ENCODE measurements at regions of chr18 and their contacts with region 1.

Region 1: GRCh38 chr18:23503038-23503962 is at the start of gene RMC1:
- DNase-seq: peak; percentile 94 to 99 (median 98)
- ATAC-seq: peak; percentile 91
- H3K4me3 ChIP-seq: peak within 1 kb of the TSS; percentile 73 to 91
- H3K4me3 Mint-ChIP-seq: peak within 1 kb of the TSS; percentile 93
- H3K27ac ChIP-seq: peak within 1 kb of the TSS; percentile 83 to 88
- H3K27ac Mint-ChIP-seq: peak within 1 kb of the TSS; percentile 92
- H3K4me1 ChIP-seq: peaks cover 35% of the 10 kb centered on the region
- H3K4me1 Mint-ChIP-seq: peaks cover 49% of the 10 kb centered on the region
- H3K27me3 ChIP-seq: no peaks in the 10 kb centered on the region
- H3K27me3 Mint-ChIP-seq: no peaks in the 10 kb centered on the region
- CTCF ChIP-seq: no peak
- total RNA-seq, gene RMC1: 59.8 to 62.2 TPM

Region 2: GRCh38 chr18:23437357-23438045 is 65.8 kb before region 1 on chr18:
- CTCF ChIA-PET with region 1: interaction called, 3 read pairs
- POLR2A ChIA-PET with region 1: no interaction called
- intact Hi-C with region 1: loop called (anchors 1 to 5 kb)
- DNase-seq: peak; percentile 46 to 81 (median 77)
- ATAC-seq: peak; percentile 95
- H3K4me3 ChIP-seq: peak overlapping the region; percentile 81 to 96
- H3K4me3 Mint-ChIP-seq: peak overlapping the region; percentile 88
- H3K27ac ChIP-seq: peak overlapping the region in 1 of 2 experiments; percentile 21
- H3K27ac Mint-ChIP-seq: no peak overlapping the region
- H3K4me1 ChIP-seq: peaks cover 17% of the 10 kb centered on the region
- H3K4me1 Mint-ChIP-seq: peaks cover 22% of the 10 kb centered on the region
- H3K27me3 ChIP-seq: peaks cover 0 to 2% of the 10 kb centered on the region in 2 experiments
- H3K27me3 Mint-ChIP-seq: no peaks in the 10 kb centered on the region
- CTCF ChIP-seq: no peak

Region 3: DNA sequence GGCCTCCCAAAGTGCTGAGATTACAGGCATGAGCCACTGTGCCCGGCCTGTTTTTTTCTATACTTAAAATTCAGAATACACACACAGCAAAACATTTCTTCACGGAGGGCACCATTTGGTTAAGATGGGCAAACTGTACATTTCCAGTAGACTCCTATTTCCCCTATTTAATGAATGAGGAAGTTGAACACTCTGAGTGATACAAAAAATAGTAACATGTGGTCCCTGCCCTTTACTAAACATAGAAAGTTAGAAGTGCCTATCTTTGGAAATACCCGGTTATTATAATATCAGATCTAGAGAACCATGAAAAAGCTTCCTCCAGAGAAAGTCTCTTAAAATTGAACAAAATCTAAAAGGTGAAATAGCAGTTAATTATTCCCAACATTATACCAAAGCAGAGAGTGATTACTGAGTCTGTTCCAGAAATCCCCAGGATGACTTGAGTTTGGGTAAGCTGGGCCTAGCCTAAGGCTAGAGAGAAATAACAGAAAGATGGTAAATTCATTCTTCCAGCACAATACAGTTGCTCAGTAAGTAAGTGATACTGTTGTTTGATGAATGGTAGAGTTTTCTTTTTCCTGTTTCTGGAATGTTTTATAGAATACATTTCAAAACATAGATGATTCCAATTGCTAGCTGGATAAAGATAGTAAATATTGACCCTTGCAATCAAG is 23.3 kb before region 1 on chr18:
- CTCF ChIA-PET with region 1: interaction called, 10 read pairs
- POLR2A ChIA-PET with region 1: no interaction called
- intact Hi-C with region 1: no loop called
- DNase-seq: peak in 1 of 9 experiments; percentile 12
- ATAC-seq: no peak
- H3K4me3 ChIP-seq: no peak overlapping the region
- H3K4me3 Mint-ChIP-seq: no peak overlapping the region
- H3K27ac ChIP-seq: no peak overlapping the region
- H3K27ac Mint-ChIP-seq: peak overlapping the region; percentile 55
- H3K4me1 ChIP-seq: no peaks in the 10 kb centered on the region
- H3K4me1 Mint-ChIP-seq: no peaks in the 10 kb centered on the region
- H3K27me3 ChIP-seq: no peaks in the 10 kb centered on the region
- H3K27me3 Mint-ChIP-seq: no peaks in the 10 kb centered on the region
- CTCF ChIP-seq: no peak

Region 4: GRCh38 chr18:23515911-23516546 is 12.7 kb after region 1 on chr18:
- CTCF ChIA-PET with region 1: interaction called, 15 read pairs
- POLR2A ChIA-PET with region 1: interaction called, 4 read pairs
- intact Hi-C with region 1: loop called (anchors 1 to 2 kb)
- DNase-seq: peak; percentile 49 to 87 (median 76)
- ATAC-seq: peak; percentile 99
- H3K4me3 ChIP-seq: no peak overlapping the region
- H3K4me3 Mint-ChIP-seq: no peak overlapping the region
- H3K27ac ChIP-seq: peak overlapping the region in 1 of 2 experiments; percentile 20
- H3K27ac Mint-ChIP-seq: peak overlapping the region; percentile 70
- H3K4me1 ChIP-seq: no peaks in the 10 kb centered on the region
- H3K4me1 Mint-ChIP-seq: peaks cover 15% of the 10 kb centered on the region
- H3K27me3 ChIP-seq: no peaks in the 10 kb centered on the region
- H3K27me3 Mint-ChIP-seq: no peaks in the 10 kb centered on the region
- CTCF ChIP-seq: peak; percentile 86

Region 5: DNA sequence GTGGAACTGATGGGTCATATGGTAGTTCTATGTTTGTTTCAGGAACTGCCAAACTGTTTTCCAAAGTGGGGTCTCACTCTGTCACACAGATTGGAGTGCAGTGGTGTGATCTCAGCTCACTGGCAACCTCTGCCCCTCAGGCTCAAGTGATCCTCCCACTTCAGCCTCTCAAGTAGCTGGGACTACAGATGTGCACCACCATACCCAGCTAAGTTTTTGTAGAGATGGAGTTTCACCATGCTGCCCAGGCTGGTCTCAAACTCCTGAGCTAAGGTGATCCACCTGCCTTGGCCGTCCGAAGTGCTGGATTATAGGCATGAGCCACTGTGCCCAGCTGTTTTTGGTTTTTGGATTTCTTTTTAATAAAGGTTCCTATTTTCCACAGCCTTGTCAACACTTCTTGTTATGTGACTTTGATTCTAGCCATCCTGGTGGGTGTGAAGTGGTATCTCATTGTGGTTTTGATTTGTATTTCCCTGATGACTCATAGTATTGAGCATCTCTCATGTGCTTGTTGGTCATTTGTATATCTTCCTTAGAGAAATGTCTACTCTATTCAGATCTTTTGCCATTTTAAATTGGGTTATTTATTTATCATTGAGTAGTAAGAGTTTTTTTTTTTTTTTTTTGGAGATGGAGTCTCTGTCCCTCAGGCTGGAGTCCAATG is 60.2 kb after region 1 on chr18:
- CTCF ChIA-PET with region 1: no interaction called
- POLR2A ChIA-PET with region 1: no interaction called
- intact Hi-C with region 1: no loop called
- DNase-seq: peak in 2 of 9 experiments; percentile 63 to 75
- ATAC-seq: peak; percentile 86
- H3K4me3 ChIP-seq: no peak overlapping the region
- H3K4me3 Mint-ChIP-seq: no peak overlapping the region
- H3K27ac ChIP-seq: peak overlapping the region in 1 of 2 experiments; percentile 34
- H3K27ac Mint-ChIP-seq: peak overlapping the region; percentile 29
- H3K4me1 ChIP-seq: peaks cover 5% of the 10 kb centered on the region
- H3K4me1 Mint-ChIP-seq: peaks cover 4% of the 10 kb centered on the region
- H3K27me3 ChIP-seq: no peaks in the 10 kb centered on the region
- H3K27me3 Mint-ChIP-seq: no peaks in the 10 kb centered on the region
- CTCF ChIP-seq: no peak

Region 6: GRCh38 chr18:23703057-23703986 is 200.0 kb after region 1 on chr18:
- CTCF ChIA-PET with region 1: interaction called, 12 read pairs
- POLR2A ChIA-PET with region 1: no interaction called
- intact Hi-C with region 1: loop called (anchors 1 to 2 kb)
- DNase-seq: peak in 3 of 9 experiments; percentile 12 to 62 (median 53)
- ATAC-seq: peak; percentile 63
- H3K4me3 ChIP-seq: no peak overlapping the region
- H3K4me3 Mint-ChIP-seq: no peak overlapping the region
- H3K27ac ChIP-seq: no peak overlapping the region
- H3K27ac Mint-ChIP-seq: no peak overlapping the region
- H3K4me1 ChIP-seq: no peaks in the 10 kb centered on the region
- H3K4me1 Mint-ChIP-seq: no peaks in the 10 kb centered on the region
- H3K27me3 ChIP-seq: no peaks in the 10 kb centered on the region
- H3K27me3 Mint-ChIP-seq: peaks cover 15% of the 10 kb centered on the region
- CTCF ChIP-seq: no peak

Region 7: GRCh38 chr18:24014062-24014985 is 511.0 kb after region 1 on chr18 and contains the start of gene TTC39C:
- CTCF ChIA-PET with region 1: no interaction called
- POLR2A ChIA-PET with region 1: no interaction called
- intact Hi-C with region 1: loop called (anchors 5 to 10 kb)
- DNase-seq: peak; percentile 55 to 90 (median 83)
- ATAC-seq: peak; percentile 68
- H3K4me3 ChIP-seq: peak within 1 kb of the TSS; percentile 72 to 90
- H3K4me3 Mint-ChIP-seq: peak within 1 kb of the TSS; percentile 92
- H3K27ac ChIP-seq: peak within 1 kb of the TSS; percentile 58 to 80
- H3K27ac Mint-ChIP-seq: peak within 1 kb of the TSS; percentile 90
- H3K4me1 ChIP-seq: peaks cover 78% of the 10 kb centered on the region
- H3K4me1 Mint-ChIP-seq: peaks cover 78% of the 10 kb centered on the region
- H3K27me3 ChIP-seq: no peaks in the 10 kb centered on the region
- H3K27me3 Mint-ChIP-seq: no peaks in the 10 kb centered on the region
- CTCF ChIP-seq: no peak
- total RNA-seq, gene TTC39C: 84.7 to 85.7 TPM

Measured in CD8-positive, alpha-beta T cell (primary cell).